ENCODE measurements at regions of chr6 and their contacts with region 1.

Region 1: GRCh38 chr6:165884813-165885765 is 222.0 kb upstream of the PDE10A start:
- DNase-seq: peak; percentile 91
- ATAC-seq: peak; percentile 99
- H3K4me3 Mint-ChIP-seq: peak overlapping the region; percentile 45
- H3K27ac Mint-ChIP-seq: peak overlapping the region; percentile 22
- H3K4me1 Mint-ChIP-seq: peaks cover 11% of the 10 kb centered on the region
- H3K27me3 Mint-ChIP-seq: peaks cover 5% of the 10 kb centered on the region
- CTCF ChIP-seq: peak; percentile 87

Region 2: DNA sequence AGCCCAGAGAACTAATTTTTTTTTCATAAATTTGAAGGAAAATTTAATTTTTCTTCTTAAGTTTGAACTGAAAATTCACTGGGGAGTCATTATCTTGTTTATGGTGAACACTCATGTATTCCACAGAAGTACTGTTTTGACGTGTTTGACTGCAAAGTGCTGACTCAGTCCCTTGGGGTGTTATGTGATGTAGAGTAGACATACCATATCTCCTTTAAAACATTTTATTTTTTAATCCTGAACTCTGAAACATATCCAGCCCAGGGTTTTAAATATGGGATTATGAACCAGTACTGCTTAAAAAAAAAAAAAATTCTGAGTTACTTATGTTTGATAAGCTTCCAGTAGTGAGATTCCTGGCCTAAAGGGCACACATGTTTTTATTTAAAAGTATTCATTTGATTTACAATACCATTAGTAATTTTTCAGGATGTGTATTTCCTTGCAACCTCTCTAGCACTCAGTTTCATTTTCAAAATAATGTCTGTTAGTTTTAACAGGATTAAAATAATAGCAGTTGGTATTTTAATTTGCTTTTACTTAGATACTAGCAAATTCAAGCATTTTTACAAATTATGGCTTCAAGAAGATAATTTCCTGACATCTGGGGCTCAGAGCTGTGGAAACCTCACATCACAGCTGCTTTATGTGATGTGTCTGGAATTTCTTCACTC is 140.4 kb before region 1 on chr6:
- CTCF ChIA-PET with region 1: no interaction called
- POLR2A ChIA-PET with region 1: no interaction called
- intact Hi-C with region 1: no loop called
- DNase-seq: no peak
- ATAC-seq: no peak
- H3K4me3 Mint-ChIP-seq: no peak overlapping the region
- H3K27ac Mint-ChIP-seq: no peak overlapping the region
- H3K4me1 Mint-ChIP-seq: no peaks in the 10 kb centered on the region
- H3K27me3 Mint-ChIP-seq: peaks cover 4% of the 10 kb centered on the region
- CTCF ChIP-seq: no peak

Region 3: GRCh38 chr6:166097915-166098522 is 212.9 kb after region 1 on chr6:
- CTCF ChIA-PET with region 1: interaction called, 33 read pairs
- POLR2A ChIA-PET with region 1: no interaction called
- intact Hi-C with region 1: no loop called
- DNase-seq: peak; percentile 81
- ATAC-seq: peak; percentile 95
- H3K4me3 Mint-ChIP-seq: peak overlapping the region; percentile 21
- H3K27ac Mint-ChIP-seq: no peak overlapping the region
- H3K4me1 Mint-ChIP-seq: no peaks in the 10 kb centered on the region
- H3K27me3 Mint-ChIP-seq: peaks cover 36% of the 10 kb centered on the region
- CTCF ChIP-seq: peak; percentile 87

Region 4: DNA sequence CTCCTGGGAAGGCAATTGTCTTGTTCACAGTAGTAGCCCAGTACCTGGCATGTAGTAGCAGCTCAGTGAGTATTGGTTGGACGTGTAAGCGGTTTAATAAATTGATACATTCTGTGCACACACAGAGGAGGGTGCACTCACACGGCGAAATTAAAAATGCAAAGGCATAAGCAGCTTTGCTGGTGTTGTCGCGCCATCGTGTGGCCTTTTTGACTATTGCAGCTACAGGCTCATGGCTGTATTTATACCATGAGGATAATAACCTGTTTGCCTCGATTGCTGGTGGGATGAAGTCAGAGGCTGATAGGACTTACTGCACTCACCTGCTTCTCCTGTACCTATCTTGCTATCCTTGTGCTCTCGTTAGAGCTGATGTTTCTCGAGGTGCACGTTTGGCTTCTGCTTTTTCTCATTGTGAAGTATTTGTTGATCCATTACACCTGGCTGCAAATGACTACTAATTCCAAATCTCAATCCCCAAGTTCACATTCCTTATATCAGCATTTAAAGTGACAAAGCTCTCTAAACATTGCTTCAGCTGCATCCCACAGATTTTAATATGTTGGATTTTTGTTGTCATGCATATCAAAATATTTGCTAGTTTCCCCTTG is 221.1 kb after region 1 on chr6:
- CTCF ChIA-PET with region 1: interaction called, 58 read pairs
- POLR2A ChIA-PET with region 1: no interaction called
- intact Hi-C with region 1: loop called (anchors 1 kb)
- DNase-seq: peak; percentile 88
- ATAC-seq: peak; percentile 94
- H3K4me3 Mint-ChIP-seq: no peak overlapping the region
- H3K27ac Mint-ChIP-seq: no peak overlapping the region
- H3K4me1 Mint-ChIP-seq: peaks cover 5% of the 10 kb centered on the region
- H3K27me3 Mint-ChIP-seq: peaks cover 8% of the 10 kb centered on the region
- CTCF ChIP-seq: peak; percentile 91

Measured in activated CD8-positive, alpha-beta T cell treated with anti-CD3 and anti-CD28 coated beads for 36 hours (primary cell).